Right cardiac atrium (tissue), 5 donors: ENCODE measurements at regions of chr1 and their contacts with region 1.

Region 1: GRCh38 chr1:224650290-224650689 is 34.2 kb downstream of the CNIH3 start:
- DNase-seq: no peak
- ATAC-seq: no peak
- H3K4me3 ChIP-seq: no peak overlapping the region
- H3K27ac ChIP-seq: no peak overlapping the region
- H3K4me1 ChIP-seq: no peaks in the 10 kb centered on the region
- H3K27me3 ChIP-seq: no peaks in the 10 kb centered on the region

Region 2: DNA sequence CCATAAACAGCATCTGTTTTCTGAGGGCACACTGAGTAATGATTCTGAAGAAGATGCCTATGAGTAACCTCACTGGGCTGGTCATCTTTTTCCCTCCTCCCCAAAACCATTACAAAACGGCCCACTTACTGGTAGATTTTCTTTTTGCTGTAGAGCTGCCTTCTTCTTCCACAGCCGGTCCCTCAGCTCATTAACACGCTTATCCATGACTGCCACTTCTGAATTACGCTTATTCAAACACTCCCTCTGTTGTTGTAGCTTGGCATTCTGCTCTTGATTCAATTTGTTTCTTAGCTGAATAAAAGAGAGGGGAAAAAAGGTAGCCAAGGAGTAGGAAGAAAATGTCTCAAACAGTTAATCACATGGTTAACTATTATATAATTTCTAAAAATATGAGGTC is 847.7 kb before region 1 on chr1:
- intact Hi-C with region 1: no loop called
- DNase-seq: no peak
- ATAC-seq: no peak
- H3K4me3 ChIP-seq: no peak overlapping the region
- H3K27ac ChIP-seq: no peak overlapping the region
- H3K4me1 ChIP-seq: no peaks in the 10 kb centered on the region
- H3K27me3 ChIP-seq: no peaks in the 10 kb centered on the region

Region 3: GRCh38 chr1:224700915-224701531 is 50.7 kb after region 1 on chr1:
- intact Hi-C with region 1: no loop called
- DNase-seq: no peak
- ATAC-seq: no peak
- H3K4me3 ChIP-seq: no peak overlapping the region
- H3K27ac ChIP-seq: no peak overlapping the region
- H3K4me1 ChIP-seq: no peaks in the 10 kb centered on the region
- H3K27me3 ChIP-seq: no peaks in the 10 kb centered on the region

Region 4: GRCh38 chr1:224736619-224737352 is 86.5 kb after region 1 on chr1:
- intact Hi-C with region 1: loop called in 1 of 4 experiments (anchors 10 kb)
- DNase-seq: peak; percentile 46 to 63 (median 60)
- ATAC-seq: peak; percentile 69 to 71
- H3K4me3 ChIP-seq: no peak overlapping the region
- H3K27ac ChIP-seq: no peak overlapping the region
- H3K4me1 ChIP-seq: peaks cover 10% of the 10 kb centered on the region
- H3K27me3 ChIP-seq: no peaks in the 10 kb centered on the region